ENCODE measurements at regions of chr14 and their contacts with region 1.

Region 1: GRCh38 chr14:54175298-54175942 is 218.8 kb upstream of the BMP4 start:
- DNase-seq: peak in 4 of 5 donors; percentile 22 to 32 (median 26)
- H3K4me3 ChIP-seq: no peak overlapping the region
- H3K4me3 Mint-ChIP-seq: no peak overlapping the region
- H3K27ac ChIP-seq: no peak overlapping the region
- H3K27ac Mint-ChIP-seq: no peak overlapping the region
- H3K4me1 ChIP-seq: no peaks in the 10 kb centered on the region
- H3K4me1 Mint-ChIP-seq: peaks cover 0 to 7% (median 4%) of the 10 kb centered on the region in 4 donors
- H3K27me3 ChIP-seq: no peaks in the 10 kb centered on the region
- H3K27me3 Mint-ChIP-seq: peaks cover 18 to 26% of the 10 kb centered on the region in 2 donors

Region 2: DNA sequence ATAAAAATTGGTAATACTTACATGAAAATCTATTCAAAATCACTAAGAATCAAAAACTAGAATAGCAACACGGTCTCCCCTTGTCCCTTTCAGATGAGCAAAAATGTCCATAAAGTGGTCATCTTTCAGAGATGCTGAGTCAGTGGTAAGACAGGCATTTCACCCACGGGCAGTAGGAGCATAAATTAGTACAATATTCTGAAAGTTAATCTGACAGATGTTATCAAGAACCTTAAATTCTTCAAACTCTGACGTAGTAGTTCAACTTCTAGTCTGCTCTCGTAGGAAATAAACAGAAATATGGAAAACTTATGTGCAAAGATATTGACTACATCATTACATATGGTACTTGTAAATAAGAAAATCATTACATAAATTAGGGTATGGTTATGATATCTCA is 1350.9 kb before region 1 on chr14:
- CTCF ChIA-PET with region 1: no interaction called
- POLR2A ChIA-PET with region 1: no interaction called
- intact Hi-C with region 1: loop called (anchors 10 kb)
- DNase-seq: no peak
- H3K4me3 ChIP-seq: no peak overlapping the region
- H3K4me3 Mint-ChIP-seq: no peak overlapping the region
- H3K27ac ChIP-seq: no peak overlapping the region
- H3K27ac Mint-ChIP-seq: no peak overlapping the region
- H3K4me1 ChIP-seq: no peaks in the 10 kb centered on the region
- H3K4me1 Mint-ChIP-seq: peaks cover 0 to 7% (median 4%) of the 10 kb centered on the region in 4 donors
- H3K27me3 ChIP-seq: no peaks in the 10 kb centered on the region
- H3K27me3 Mint-ChIP-seq: peaks cover 1 to 3% of the 10 kb centered on the region in 2 donors

Region 3: DNA sequence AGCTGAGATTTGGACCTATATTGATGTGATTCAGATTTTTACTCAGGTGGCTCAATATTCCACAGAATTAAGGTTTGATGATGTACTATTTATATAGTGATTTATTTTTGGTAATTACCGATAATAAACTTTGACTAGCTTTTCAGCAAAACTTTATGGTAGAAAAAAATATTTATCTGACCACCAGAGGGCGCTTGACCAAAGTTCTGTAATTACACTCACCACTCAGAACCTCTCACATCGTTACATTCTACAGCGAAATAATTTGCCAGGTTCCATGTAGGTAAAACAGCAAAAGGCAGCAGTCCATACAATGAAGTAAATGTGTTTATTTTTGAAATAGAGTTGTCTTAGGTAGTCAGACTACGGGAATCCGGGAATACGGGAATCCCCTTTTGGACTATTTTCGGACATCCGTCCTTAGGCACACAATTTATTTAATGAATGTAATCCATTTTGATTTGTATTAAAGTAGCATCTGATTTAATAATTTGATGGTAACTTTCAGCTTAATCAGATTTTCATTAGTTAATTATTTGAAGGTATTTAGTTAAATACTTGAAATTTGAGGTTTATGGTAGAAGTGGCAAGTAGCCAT is 879.3 kb before region 1 on chr14:
- CTCF ChIA-PET with region 1: no interaction called
- POLR2A ChIA-PET with region 1: no interaction called
- intact Hi-C with region 1: loop called (anchors 10 kb)
- DNase-seq: peak in 4 of 5 donors; percentile 35 to 39 (median 37)
- H3K4me3 ChIP-seq: no peak overlapping the region
- H3K4me3 Mint-ChIP-seq: no peak overlapping the region
- H3K27ac ChIP-seq: no peak overlapping the region
- H3K27ac Mint-ChIP-seq: no peak overlapping the region
- H3K4me1 ChIP-seq: no peaks in the 10 kb centered on the region
- H3K4me1 Mint-ChIP-seq: no peaks in the 10 kb centered on the region
- H3K27me3 ChIP-seq: no peaks in the 10 kb centered on the region
- H3K27me3 Mint-ChIP-seq: no peaks in the 10 kb centered on the region

Region 4: DNA sequence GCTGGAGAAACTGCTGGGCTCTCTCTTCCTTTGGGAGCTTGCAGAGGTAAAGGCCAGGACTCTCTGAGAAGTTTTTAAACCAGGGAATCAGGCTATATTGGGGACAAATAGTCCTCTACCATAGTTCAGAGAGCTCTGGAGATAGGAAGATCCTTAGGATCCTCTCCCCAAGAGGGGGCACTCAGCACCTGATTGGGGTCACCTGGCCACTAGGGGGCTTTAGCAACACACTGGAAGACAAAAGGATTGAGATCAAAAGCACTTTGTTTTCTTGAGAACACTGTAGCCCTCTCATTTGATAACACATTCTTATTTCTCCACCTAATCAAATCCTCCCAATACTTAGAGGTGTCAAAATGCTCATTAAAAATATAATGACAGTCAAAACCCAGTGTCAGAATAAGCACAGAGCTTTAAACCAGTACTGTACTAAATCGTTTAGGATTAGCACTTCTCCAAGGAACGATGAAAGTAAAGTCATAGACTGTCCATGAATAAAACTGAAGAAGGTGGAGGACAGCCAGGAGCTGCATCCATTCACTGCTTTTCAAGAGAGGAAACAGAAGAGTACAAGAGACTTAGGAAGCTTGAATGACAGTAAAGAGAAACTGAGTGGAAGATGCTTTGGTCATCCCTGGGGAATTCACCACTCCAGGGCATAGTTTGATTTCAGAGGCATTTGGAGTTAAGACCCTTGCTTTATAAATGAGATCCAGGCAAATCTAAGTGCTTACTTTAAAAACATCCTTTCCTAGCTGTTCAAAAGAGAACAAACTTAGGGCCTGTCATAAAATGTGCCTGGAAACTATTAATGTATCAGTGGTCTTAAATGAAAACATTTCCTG is 245.3 kb before region 1 on chr14:
- CTCF ChIA-PET with region 1: interaction called, 13 read pairs
- POLR2A ChIA-PET with region 1: no interaction called
- intact Hi-C with region 1: no loop called
- DNase-seq: peak in 2 of 5 donors; percentile 8 to 12
- H3K4me3 ChIP-seq: no peak overlapping the region
- H3K4me3 Mint-ChIP-seq: no peak overlapping the region
- H3K27ac ChIP-seq: no peak overlapping the region
- H3K27ac Mint-ChIP-seq: no peak overlapping the region
- H3K4me1 ChIP-seq: no peaks in the 10 kb centered on the region
- H3K4me1 Mint-ChIP-seq: no peaks in the 10 kb centered on the region
- H3K27me3 ChIP-seq: no peaks in the 10 kb centered on the region
- H3K27me3 Mint-ChIP-seq: peaks cover 3 to 8% of the 10 kb centered on the region in 2 donors

Region 5: DNA sequence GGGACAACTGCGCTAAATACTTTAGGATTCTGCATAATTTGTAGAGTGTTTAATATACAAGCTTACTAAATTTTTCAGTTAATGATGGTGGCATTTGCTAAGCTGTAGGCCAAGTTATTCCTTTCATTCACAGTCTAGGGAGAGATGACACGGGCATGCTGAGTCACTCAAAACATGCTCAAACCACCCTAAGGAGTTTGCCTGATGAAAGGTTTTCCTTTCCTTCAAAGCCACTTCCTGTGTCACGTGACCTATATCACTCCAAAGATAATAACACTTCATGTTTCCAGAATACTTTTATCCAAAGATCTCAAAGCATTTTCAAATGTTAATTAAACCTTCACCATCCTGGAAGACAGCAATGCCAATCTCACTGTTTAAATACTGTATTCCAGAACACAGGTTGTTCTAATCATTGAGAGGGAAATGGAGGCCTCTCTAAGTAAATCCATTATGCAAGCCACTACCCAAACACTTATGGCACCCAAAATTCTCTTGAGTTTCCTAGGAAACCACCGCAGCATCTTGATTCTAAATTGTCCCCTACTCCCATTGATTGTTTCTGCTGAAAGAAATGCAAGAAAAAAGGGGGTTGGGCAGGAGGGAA is 14.4 kb after region 1 on chr14:
- CTCF ChIA-PET with region 1: interaction called, 24 read pairs
- POLR2A ChIA-PET with region 1: no interaction called
- intact Hi-C with region 1: no loop called
- DNase-seq: no peak
- H3K4me3 ChIP-seq: no peak overlapping the region
- H3K4me3 Mint-ChIP-seq: no peak overlapping the region
- H3K27ac ChIP-seq: no peak overlapping the region
- H3K27ac Mint-ChIP-seq: no peak overlapping the region
- H3K4me1 ChIP-seq: no peaks in the 10 kb centered on the region
- H3K4me1 Mint-ChIP-seq: peaks cover 0 to 4% (median 0%) of the 10 kb centered on the region in 4 donors
- H3K27me3 ChIP-seq: no peaks in the 10 kb centered on the region
- H3K27me3 Mint-ChIP-seq: peaks cover 0 to 2% of the 10 kb centered on the region in 2 donors

Measured in CD4-positive, alpha-beta memory T cell (primary cell).